ENCODE measurements at regions of chr14 and their contacts with region 1.

Region 1: GRCh38 chr14:42980419-42980818 is 1373.7 kb downstream of the LRFN5 start:
- DNase-seq: no peak
- ATAC-seq: no peak
- H3K4me3 ChIP-seq: no peak overlapping the region
- H3K27ac ChIP-seq: no peak overlapping the region
- H3K4me1 ChIP-seq: no peaks in the 10 kb centered on the region
- H3K27me3 ChIP-seq: no peaks in the 10 kb centered on the region

Region 2: GRCh38 chr14:43042396-43042795 is 62.0 kb after region 1 on chr14:
- intact Hi-C with region 1: no loop called
- DNase-seq: no peak
- ATAC-seq: no peak
- H3K4me3 ChIP-seq: no peak overlapping the region
- H3K27ac ChIP-seq: no peak overlapping the region
- H3K4me1 ChIP-seq: no peaks in the 10 kb centered on the region
- H3K27me3 ChIP-seq: no peaks in the 10 kb centered on the region

Region 3: DNA sequence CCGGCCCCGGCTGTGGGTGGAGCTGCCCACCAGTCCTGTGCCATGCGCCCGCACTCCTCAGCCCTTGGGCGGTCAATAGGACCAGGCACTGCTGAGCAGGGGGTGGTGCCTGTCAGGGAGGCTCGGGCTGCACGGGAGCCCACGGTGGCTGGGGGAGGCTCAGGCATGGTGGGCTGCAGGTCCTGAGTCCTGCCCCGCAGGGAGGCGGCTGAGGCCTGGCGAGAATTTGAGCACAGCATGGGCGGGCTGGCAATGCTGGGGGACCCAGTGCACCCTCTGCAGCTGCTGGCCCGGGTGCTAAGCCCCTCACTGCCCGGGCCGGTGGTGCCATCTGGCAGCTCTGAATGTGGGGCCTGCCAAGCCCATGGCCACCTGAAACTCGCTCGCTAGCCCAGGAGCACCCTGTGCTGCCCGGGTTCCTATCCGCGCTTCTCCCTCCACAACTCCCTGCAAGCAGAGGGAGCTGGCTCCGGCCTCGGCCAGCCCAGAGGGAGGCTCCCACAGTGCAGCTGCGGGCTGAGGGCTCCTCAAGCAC is 155.5 kb after region 1 on chr14:
- intact Hi-C with region 1: no loop called
- DNase-seq: peak in 2 of 3 donors; percentile 39 to 40
- ATAC-seq: no peak
- H3K4me3 ChIP-seq: no peak overlapping the region
- H3K27ac ChIP-seq: no peak overlapping the region
- H3K4me1 ChIP-seq: no peaks in the 10 kb centered on the region
- H3K27me3 ChIP-seq: no peaks in the 10 kb centered on the region

Region 4: DNA sequence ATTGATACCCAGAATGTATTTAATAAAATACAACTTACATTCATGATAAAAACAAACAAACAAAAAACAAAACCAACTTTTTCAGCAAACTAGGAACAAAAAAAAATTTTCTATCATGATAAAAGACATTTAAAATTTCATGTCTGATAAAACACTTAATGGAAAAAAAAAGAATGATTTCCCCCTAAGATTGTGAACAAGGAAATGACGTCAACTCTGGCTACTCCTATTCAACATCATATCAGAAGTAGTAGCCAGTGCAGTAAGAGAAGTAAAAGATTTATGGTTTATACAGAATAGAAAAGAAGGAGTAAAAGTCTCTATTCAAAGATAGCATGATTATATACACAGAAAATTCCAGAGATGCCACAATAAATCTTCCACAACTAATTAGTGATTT is 220.1 kb after region 1 on chr14:
- intact Hi-C with region 1: no loop called
- DNase-seq: no peak
- ATAC-seq: no peak
- H3K4me3 ChIP-seq: no peak overlapping the region
- H3K27ac ChIP-seq: no peak overlapping the region
- H3K4me1 ChIP-seq: no peaks in the 10 kb centered on the region
- H3K27me3 ChIP-seq: no peaks in the 10 kb centered on the region

Region 5: DNA sequence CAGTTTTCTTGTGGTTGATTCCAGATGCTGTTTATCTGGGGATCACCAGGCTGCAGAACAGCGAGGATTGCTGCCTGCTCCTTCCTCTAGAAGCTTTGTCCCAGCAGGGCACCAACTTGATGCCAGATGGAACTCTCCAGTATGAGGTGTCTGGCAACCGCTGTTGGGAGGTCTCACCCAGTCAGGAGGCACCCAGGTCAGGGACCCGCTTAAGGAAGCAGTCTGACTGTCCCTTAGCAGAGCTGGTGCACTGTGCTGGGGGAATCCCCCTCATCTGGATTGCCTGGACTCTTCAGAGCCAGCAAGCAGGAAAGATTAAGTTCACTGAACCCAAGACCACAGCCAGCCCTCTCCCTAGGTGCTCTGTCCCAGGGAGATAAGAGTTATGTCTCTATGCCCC is 361.5 kb after region 1 on chr14:
- intact Hi-C with region 1: loop called in 1 of 4 experiments (anchors 10 kb)
- DNase-seq: no peak
- ATAC-seq: no peak
- H3K4me3 ChIP-seq: no peak overlapping the region
- H3K27ac ChIP-seq: no peak overlapping the region
- H3K4me1 ChIP-seq: no peaks in the 10 kb centered on the region
- H3K27me3 ChIP-seq: no peaks in the 10 kb centered on the region